Activated CD4-positive, alpha-beta T cell treated with anti-CD3 and anti-CD28 coated beads for 36 hours (primary cell): ENCODE measurements at regions of chr10 and their contacts with region 1.

Region 1: GRCh38 chr10:6401562-6402348 is 178.3 kb downstream of the PRKCQ start:
- DNase-seq: peak; percentile 76
- ATAC-seq: peak; percentile 89
- H3K4me3 Mint-ChIP-seq: peak overlapping the region; percentile 56
- H3K27ac Mint-ChIP-seq: peak overlapping the region; percentile 78
- H3K4me1 Mint-ChIP-seq: peaks cover 49% of the 10 kb centered on the region
- H3K27me3 Mint-ChIP-seq: peaks cover 11% of the 10 kb centered on the region

Region 2: GRCh38 chr10:6088721-6089390 is 312.9 kb before region 1 on chr10 and contains the start of gene RBM17:
- CTCF ChIA-PET with region 1: interaction called, 11 read pairs
- POLR2A ChIA-PET with region 1: no interaction called
- intact Hi-C with region 1: no loop called
- DNase-seq: peak; percentile 98
- ATAC-seq: peak; percentile 70
- H3K4me3 Mint-ChIP-seq: peak within 1 kb of the TSS; percentile 90
- H3K27ac Mint-ChIP-seq: peak within 1 kb of the TSS; percentile 78
- H3K4me1 Mint-ChIP-seq: peaks cover 73% of the 10 kb centered on the region
- H3K27me3 Mint-ChIP-seq: no peaks in the 10 kb centered on the region
- total RNA-seq, gene RBM17: 206 to 246 TPM

Region 3: DNA sequence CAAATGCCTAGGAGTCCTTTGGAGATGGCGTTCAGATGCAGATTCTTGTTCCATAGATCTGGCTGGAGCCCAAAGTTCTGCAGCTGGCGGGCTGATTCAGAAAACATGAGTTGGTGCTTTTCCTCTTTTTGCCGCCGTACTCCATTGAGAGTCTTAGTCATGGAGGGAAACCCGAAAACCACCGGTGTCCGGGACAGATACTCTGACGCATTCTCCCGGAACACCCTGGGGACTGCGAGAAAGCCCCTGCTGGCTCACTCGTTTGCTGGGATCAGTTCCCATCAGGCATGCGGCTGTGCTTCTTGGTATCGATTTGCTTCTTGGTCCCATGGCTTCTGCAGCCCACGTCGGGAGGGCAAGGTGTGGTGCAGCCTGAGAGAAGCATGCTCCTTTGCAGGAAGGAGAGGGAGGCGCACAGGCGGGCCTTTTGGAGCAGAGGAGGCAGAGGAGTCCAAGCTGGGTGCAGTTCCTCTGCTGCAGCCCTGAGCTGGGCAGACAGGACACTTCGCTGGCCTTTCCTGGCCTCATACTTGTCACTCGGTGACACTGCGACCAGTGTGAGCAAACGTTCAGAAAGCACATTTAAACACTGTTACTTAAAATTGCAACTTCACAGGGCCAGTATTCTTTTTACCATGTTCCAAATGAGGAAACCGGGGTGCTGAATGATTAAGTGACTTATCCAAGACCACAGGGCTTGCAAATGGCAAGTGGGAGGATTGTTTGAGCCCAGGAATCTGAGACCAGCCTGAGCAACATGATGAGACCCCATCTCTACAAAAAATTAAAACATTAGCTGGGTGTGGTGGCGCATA is 229.7 kb before region 1 on chr10:
- CTCF ChIA-PET with region 1: interaction called, 16 read pairs
- POLR2A ChIA-PET with region 1: interaction called, 4 read pairs
- intact Hi-C with region 1: no loop called
- DNase-seq: peak; percentile 80
- ATAC-seq: peak; percentile 66
- H3K4me3 Mint-ChIP-seq: peak overlapping the region; percentile 29
- H3K27ac Mint-ChIP-seq: peak overlapping the region; percentile 90
- H3K4me1 Mint-ChIP-seq: peaks cover 97% of the 10 kb centered on the region
- H3K27me3 Mint-ChIP-seq: no peaks in the 10 kb centered on the region

Region 4: GRCh38 chr10:6244510-6244909 is 157.2 kb before region 1 on chr10:
- CTCF ChIA-PET with region 1: interaction called, 10 read pairs
- POLR2A ChIA-PET with region 1: no interaction called
- intact Hi-C with region 1: loop called (anchors 10 kb)
- DNase-seq: no peak
- ATAC-seq: no peak
- H3K4me3 Mint-ChIP-seq: no peak overlapping the region
- H3K27ac Mint-ChIP-seq: no peak overlapping the region
- H3K4me1 Mint-ChIP-seq: peaks cover 5% of the 10 kb centered on the region
- H3K27me3 Mint-ChIP-seq: no peaks in the 10 kb centered on the region

Region 5: GRCh38 chr10:6348096-6348874 is 53.5 kb before region 1 on chr10:
- CTCF ChIA-PET with region 1: interaction called, 32 read pairs
- POLR2A ChIA-PET with region 1: interaction called, 6 read pairs
- intact Hi-C with region 1: loop called (anchors 1 to 2 kb)
- DNase-seq: peak; percentile 94
- ATAC-seq: peak; percentile 91
- H3K4me3 Mint-ChIP-seq: peak overlapping the region; percentile 65
- H3K27ac Mint-ChIP-seq: peak overlapping the region; percentile 98
- H3K4me1 Mint-ChIP-seq: peaks cover 62% of the 10 kb centered on the region
- H3K27me3 Mint-ChIP-seq: no peaks in the 10 kb centered on the region

Region 6: DNA sequence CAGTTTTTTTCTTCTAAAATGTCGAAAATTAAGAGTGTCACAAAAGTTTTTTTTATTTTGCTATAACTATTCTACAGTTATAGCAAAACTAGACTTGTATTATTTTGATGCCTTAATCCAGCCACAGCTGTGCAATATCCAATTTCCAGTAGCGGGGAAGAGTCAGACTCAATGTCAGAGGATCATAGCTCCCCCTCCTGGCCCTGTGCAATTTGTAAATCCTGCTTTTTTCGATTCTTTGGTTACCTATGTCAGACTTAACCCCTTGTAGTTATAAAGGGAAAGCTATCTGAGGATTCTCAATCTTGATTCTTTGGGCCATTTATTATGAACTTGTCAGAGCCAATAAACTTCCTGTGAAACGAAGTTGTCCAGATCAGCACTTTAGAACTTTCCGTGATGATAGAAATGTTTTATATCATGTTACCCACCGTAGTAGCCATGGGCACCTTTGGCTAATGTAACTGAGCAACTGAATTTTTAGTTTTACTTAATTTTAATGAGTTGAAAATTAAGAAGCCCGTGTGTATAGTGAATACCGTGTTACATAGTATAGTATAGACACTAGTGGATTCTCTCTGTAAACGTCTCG is 266.0 kb after region 1 on chr10:
- CTCF ChIA-PET with region 1: interaction called, 19 read pairs
- POLR2A ChIA-PET with region 1: interaction called, 3 read pairs
- intact Hi-C with region 1: no loop called
- DNase-seq: peak; percentile 73
- ATAC-seq: peak; percentile 25
- H3K4me3 Mint-ChIP-seq: no peak overlapping the region
- H3K27ac Mint-ChIP-seq: no peak overlapping the region
- H3K4me1 Mint-ChIP-seq: peaks cover 25% of the 10 kb centered on the region
- H3K27me3 Mint-ChIP-seq: no peaks in the 10 kb centered on the region